Calu3 (cell line): ENCODE measurements at regions of chr3 and their contacts with region 1.

Region 1: DNA sequence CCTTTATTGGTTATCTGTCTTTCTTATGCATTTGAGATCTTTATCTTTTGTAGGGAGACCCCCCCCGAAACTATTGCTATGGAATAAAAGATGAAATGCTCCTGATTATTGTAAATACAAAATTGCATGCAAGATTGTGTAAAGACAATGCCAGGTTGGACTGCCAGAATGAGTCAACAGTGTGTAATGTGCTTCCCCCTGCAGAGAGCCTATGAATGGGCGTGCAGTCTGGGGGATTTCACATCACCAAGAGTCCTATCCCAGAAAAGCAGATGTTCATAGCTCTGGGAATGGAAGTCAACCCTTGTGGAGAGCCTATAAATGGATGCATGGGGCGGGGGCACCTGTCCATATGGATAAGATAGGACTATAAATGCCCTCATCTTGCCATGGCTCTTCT is 584.3 kb downstream of the NSUN3 start:
- DNase-seq: peak; percentile 48
- H3K4me3 Mint-ChIP-seq: peak overlapping the region; percentile 64
- H3K27ac Mint-ChIP-seq: peak overlapping the region; percentile 96
- H3K4me1 Mint-ChIP-seq: peaks cover 61% of the 10 kb centered on the region
- H3K27me3 Mint-ChIP-seq: no peaks in the 10 kb centered on the region
- CTCF ChIP-seq: no peak

Region 2: GRCh38 chr3:94522488-94522887 is 124.6 kb before region 1 on chr3:
- CTCF ChIA-PET with region 1: no interaction called
- intact Hi-C with region 1: loop called (anchors 5 kb)
- DNase-seq: peak; percentile 11
- H3K4me3 Mint-ChIP-seq: no peak overlapping the region
- H3K27ac Mint-ChIP-seq: no peak overlapping the region
- H3K4me1 Mint-ChIP-seq: no peaks in the 10 kb centered on the region
- H3K27me3 Mint-ChIP-seq: no peaks in the 10 kb centered on the region
- CTCF ChIP-seq: peak; percentile 29

Region 3: DNA sequence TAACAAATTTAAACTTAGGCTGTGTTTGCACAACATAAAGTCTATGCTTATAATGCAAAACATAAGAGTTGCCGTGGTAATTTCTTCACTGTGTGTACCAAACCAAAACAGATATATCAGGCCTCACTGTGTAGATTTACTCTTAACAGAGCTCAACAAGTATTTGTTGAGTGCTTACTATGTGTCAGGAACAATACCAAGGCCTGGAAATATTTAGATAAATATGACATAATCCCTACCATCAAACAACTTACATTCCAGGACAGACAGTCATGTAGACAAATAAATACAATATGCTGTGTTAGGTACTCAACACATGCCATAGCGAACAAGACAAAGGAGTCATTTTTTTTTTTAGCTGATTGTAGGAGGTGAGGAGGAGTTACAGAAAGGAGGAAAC is 30.3 kb before region 1 on chr3:
- CTCF ChIA-PET with region 1: no interaction called
- intact Hi-C with region 1: loop called (anchors 2 kb)
- DNase-seq: no peak
- H3K4me3 Mint-ChIP-seq: peak overlapping the region; percentile 41
- H3K27ac Mint-ChIP-seq: peak overlapping the region; percentile 84
- H3K4me1 Mint-ChIP-seq: peaks cover 27% of the 10 kb centered on the region
- H3K27me3 Mint-ChIP-seq: no peaks in the 10 kb centered on the region
- CTCF ChIP-seq: no peak

Region 4: GRCh38 chr3:94686208-94686607 is 39.1 kb after region 1 on chr3:
- CTCF ChIA-PET with region 1: no interaction called
- intact Hi-C with region 1: no loop called
- DNase-seq: no peak
- H3K4me3 Mint-ChIP-seq: no peak overlapping the region
- H3K27ac Mint-ChIP-seq: no peak overlapping the region
- H3K4me1 Mint-ChIP-seq: no peaks in the 10 kb centered on the region
- H3K27me3 Mint-ChIP-seq: no peaks in the 10 kb centered on the region
- CTCF ChIP-seq: no peak

Region 5: DNA sequence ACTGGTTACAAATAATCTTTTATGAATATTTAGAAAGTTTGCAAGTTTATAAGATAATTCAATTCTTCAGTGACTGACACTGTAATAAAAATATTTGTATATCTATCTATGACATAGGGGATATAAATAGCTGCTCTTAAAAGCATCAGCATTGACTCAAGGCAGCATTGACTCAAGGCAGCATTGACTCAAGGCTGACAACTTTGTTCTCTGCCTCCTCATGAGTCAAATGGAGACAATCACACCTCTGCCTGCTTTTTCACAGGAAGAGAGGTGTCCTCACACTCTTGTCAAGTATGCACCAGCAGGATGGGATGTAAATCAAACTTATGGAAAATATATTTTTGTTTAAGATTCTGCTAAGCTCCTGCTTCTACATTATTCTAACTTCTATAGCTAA is 588.8 kb after region 1 on chr3:
- CTCF ChIA-PET with region 1: no interaction called
- intact Hi-C with region 1: no loop called
- DNase-seq: no peak
- H3K4me3 Mint-ChIP-seq: no peak overlapping the region
- H3K27ac Mint-ChIP-seq: no peak overlapping the region
- H3K4me1 Mint-ChIP-seq: no peaks in the 10 kb centered on the region
- H3K27me3 Mint-ChIP-seq: no peaks in the 10 kb centered on the region
- CTCF ChIP-seq: no peak